SK-N-SH (cell line): ENCODE measurements at regions of chr22 and their contacts with region 1.

Region 1: GRCh38 chr22:36856121-36856791 is 4.5 kb upstream of the NCF4 start:
- DNase-seq: peak; percentile 89
- H3K4me3 ChIP-seq: peak overlapping the region in 1 of 2 experiments; percentile 54; a peak in 1 of 4 replicates
- H3K27ac ChIP-seq: peak overlapping the region in 1 of 2 experiments; percentile 41; a peak in 1 of 4 replicates
- H3K4me1 ChIP-seq: peaks cover 0 to 9% of the 10 kb centered on the region in 2 experiments; a peak in 1 of 4 replicates
- H3K27me3 ChIP-seq: peaks cover 11% of the 10 kb centered on the region
- CTCF ChIP-seq: peak; percentile 100
- EP300 ChIP-seq: no peak; a peak in 1 of 4 replicates
- RAD21 ChIP-seq: peak; percentile 80

Region 2: DNA sequence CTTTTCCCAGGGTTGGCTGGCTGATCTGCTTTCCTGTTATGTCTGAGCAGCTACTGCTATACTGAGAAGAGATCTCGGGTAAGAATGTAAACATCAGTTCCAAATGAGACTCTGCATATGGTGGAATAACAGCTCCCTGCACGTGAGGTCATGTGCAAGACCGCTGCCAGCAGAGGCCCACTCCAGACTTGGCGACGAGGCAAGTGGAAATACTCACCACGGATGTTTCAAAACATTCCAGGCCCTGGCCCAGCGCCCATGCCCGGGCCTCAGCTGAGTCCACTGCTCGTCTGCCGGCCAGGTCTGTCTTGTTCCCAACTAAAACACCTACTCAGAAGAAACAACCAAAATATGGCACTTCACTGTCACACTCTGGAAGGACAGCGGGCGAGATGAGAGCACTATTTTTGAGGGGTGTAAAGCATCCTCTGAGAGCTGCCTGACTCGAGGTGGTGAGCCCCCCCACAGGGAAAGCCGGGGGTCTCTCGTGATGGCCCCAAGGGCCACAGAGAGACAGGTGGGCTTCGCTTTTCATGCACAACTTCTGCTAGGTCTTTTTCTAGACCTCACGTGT is 93.5 kb before region 1 on chr22:
- CTCF ChIA-PET with region 1: interaction called, 12 read pairs
- POLR2A ChIA-PET with region 1: no interaction called
- DNase-seq: no peak
- H3K4me3 ChIP-seq: no peak overlapping the region
- H3K27ac ChIP-seq: no peak overlapping the region
- H3K4me1 ChIP-seq: peaks cover 0 to 2% of the 10 kb centered on the region in 2 experiments; a peak in 1 of 4 replicates
- H3K27me3 ChIP-seq: no peaks in the 10 kb centered on the region
- CTCF ChIP-seq: no peak
- EP300 ChIP-seq: no peak
- RAD21 ChIP-seq: no peak

Region 3: DNA sequence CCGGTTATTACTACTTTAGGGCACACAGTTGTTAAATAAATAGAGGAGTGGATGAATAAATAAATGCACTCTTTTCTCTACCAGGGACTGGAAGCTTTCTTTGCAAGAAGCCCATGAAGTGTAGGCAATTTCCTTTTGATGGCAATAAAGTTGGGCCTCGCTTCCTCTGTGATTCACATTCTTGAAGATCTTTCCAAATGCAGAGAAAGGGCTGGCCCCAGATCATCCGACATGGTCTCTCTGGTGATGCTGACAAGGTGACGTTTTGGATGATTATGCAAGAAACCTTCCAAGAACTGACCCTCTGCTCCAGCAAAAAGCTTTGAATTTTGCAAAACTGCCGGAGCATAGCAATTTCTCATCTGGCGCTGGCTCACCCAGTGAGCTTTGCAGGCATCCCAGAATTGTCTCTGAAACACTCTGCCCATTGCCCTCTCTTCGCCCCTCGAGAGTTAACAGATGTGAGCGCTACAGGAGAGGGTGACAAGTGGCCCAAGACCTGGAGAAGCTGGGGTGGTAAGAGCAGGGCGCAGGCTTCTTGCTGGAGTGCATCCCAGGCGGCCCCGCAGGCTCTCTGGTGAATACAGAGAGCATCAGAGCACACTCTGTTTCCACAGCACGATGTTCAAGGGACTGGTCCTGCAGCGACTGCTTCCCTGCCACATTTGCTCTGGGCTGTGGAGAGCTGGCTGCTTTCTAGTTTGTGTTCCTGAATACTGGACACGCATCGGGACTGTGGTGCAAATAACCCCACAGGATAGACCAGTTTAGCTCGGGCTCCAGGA is 68.9 kb before region 1 on chr22:
- CTCF ChIA-PET with region 1: interaction called, 159 read pairs
- POLR2A ChIA-PET with region 1: no interaction called
- DNase-seq: no peak
- H3K4me3 ChIP-seq: no peak overlapping the region
- H3K27ac ChIP-seq: no peak overlapping the region
- H3K4me1 ChIP-seq: no peaks in the 10 kb centered on the region
- H3K27me3 ChIP-seq: peaks cover 37% of the 10 kb centered on the region
- CTCF ChIP-seq: no peak
- EP300 ChIP-seq: no peak
- RAD21 ChIP-seq: no peak

Region 4: GRCh38 chr22:36823186-36823839 is 32.9 kb before region 1 on chr22:
- CTCF ChIA-PET with region 1: interaction called, 30 read pairs
- POLR2A ChIA-PET with region 1: no interaction called
- DNase-seq: no peak
- H3K4me3 ChIP-seq: no peak overlapping the region
- H3K27ac ChIP-seq: no peak overlapping the region
- H3K4me1 ChIP-seq: no peaks in the 10 kb centered on the region
- H3K27me3 ChIP-seq: peaks cover 19% of the 10 kb centered on the region
- CTCF ChIP-seq: no peak
- EP300 ChIP-seq: no peak
- RAD21 ChIP-seq: no peak

Region 5: DNA sequence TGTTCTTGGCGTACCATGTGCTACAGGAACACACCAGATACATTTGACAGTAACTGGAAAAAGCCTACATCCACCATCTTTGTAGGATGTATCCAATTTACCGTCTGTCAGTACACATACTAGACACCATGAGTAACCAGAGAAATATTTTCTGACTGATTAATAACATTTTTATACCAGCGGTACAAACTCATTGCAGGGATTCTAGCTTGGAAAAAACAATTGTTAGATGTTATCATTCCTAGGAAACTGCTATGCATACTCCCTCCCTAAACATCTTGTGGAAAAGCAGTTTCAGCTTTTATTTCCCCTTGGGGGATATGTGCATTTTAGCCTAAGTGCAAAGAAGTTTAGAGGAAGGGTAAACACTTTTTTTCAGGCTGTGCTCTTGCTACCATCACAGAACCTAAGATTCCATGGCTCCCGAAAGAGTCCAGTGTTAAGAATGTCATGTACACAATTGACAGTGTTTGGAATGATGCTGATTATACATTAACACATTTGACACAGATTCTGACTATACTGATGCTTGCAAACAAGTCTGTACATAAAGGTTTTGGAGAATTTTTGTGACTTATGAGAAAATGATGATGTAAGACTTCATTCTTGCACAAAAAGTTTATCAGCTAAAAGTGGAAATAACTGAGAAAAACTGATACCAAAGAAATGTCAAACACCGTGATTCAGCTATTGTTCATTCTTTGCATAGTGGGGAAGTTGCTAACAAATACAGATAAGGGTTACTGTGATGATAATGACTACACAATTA is 28.3 kb after region 1 on chr22:
- CTCF ChIA-PET with region 1: interaction called, 30 read pairs
- POLR2A ChIA-PET with region 1: no interaction called
- DNase-seq: no peak
- H3K4me3 ChIP-seq: no peak overlapping the region
- H3K27ac ChIP-seq: no peak overlapping the region
- H3K4me1 ChIP-seq: no peaks in the 10 kb centered on the region
- H3K27me3 ChIP-seq: no peaks in the 10 kb centered on the region
- CTCF ChIP-seq: no peak
- EP300 ChIP-seq: no peak
- RAD21 ChIP-seq: no peak

Region 6: GRCh38 chr22:36977947-36978660 is 121.8 kb after region 1 on chr22:
- CTCF ChIA-PET with region 1: interaction called, 57 read pairs
- POLR2A ChIA-PET with region 1: no interaction called
- DNase-seq: peak; percentile 96
- H3K4me3 ChIP-seq: peak overlapping the region; percentile 45 to 61
- H3K27ac ChIP-seq: no peak overlapping the region
- H3K4me1 ChIP-seq: no peaks in the 10 kb centered on the region; a peak in 1 of 4 replicates
- H3K27me3 ChIP-seq: no peaks in the 10 kb centered on the region; the same call in 1 of the 2 replicates
- CTCF ChIP-seq: peak; percentile 91
- EP300 ChIP-seq: no peak
- RAD21 ChIP-seq: peak; percentile 94